MCF 10A (cell line): ENCODE measurements at regions of chr10 and their contacts with region 1.

Region 1: GRCh38 chr10:5446390-5446926 is 34.1 kb downstream of the NET1 start:
- DNase-seq: peak; percentile 79
- H3K4me3 Mint-ChIP-seq: peak overlapping the region; percentile 81
- H3K27ac Mint-ChIP-seq: peak overlapping the region; percentile 89
- H3K4me1 Mint-ChIP-seq: peaks cover 24% of the 10 kb centered on the region
- H3K27me3 Mint-ChIP-seq: no peaks in the 10 kb centered on the region
- CTCF ChIP-seq: no peak

Region 2: DNA sequence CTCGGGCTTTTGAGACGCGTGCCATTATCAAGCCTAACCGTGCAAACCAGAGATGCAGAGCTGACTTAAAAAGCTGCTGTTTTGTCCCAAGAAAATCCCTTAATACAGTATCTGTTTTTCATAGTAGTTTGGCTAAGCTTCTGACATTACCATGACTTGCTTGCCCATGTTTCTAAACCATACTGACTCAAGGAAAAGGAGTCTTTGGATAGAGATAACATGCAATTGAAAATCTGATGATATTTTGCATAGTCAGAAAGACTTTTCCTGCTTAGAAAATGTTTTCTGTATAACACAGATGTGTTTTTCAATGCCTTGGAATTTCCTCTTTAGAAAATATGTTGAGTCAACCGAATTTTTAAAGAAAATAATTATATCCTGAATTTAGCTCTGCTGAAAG is 642.0 kb before region 1 on chr10:
- CTCF ChIA-PET with region 1: no interaction called
- POLR2A ChIA-PET with region 1: no interaction called
- intact Hi-C with region 1: no loop called
- DNase-seq: no peak
- H3K4me3 Mint-ChIP-seq: no peak overlapping the region
- H3K27ac Mint-ChIP-seq: no peak overlapping the region
- H3K4me1 Mint-ChIP-seq: peaks cover 6% of the 10 kb centered on the region
- H3K27me3 Mint-ChIP-seq: no peaks in the 10 kb centered on the region
- CTCF ChIP-seq: no peak

Region 3: GRCh38 chr10:5534880-5535856 is 88.7 kb after region 1 on chr10:
- CTCF ChIA-PET with region 1: interaction called, 10 read pairs
- POLR2A ChIA-PET with region 1: interaction called, 30 read pairs
- intact Hi-C with region 1: no loop called
- DNase-seq: peak; percentile 88
- H3K4me3 Mint-ChIP-seq: peak overlapping the region; percentile 33
- H3K27ac Mint-ChIP-seq: no peak overlapping the region
- H3K4me1 Mint-ChIP-seq: peaks cover 29% of the 10 kb centered on the region
- H3K27me3 Mint-ChIP-seq: no peaks in the 10 kb centered on the region
- CTCF ChIP-seq: no peak

Region 4: GRCh38 chr10:5583525-5584175 is 137.2 kb after region 1 on chr10:
- CTCF ChIA-PET with region 1: interaction called, 7 read pairs
- POLR2A ChIA-PET with region 1: interaction called, 31 read pairs
- intact Hi-C with region 1: no loop called
- DNase-seq: peak; percentile 87
- H3K4me3 Mint-ChIP-seq: peak overlapping the region; percentile 51
- H3K27ac Mint-ChIP-seq: peak overlapping the region; percentile 92
- H3K4me1 Mint-ChIP-seq: peaks cover 30% of the 10 kb centered on the region
- H3K27me3 Mint-ChIP-seq: no peaks in the 10 kb centered on the region
- CTCF ChIP-seq: no peak

Region 5: DNA sequence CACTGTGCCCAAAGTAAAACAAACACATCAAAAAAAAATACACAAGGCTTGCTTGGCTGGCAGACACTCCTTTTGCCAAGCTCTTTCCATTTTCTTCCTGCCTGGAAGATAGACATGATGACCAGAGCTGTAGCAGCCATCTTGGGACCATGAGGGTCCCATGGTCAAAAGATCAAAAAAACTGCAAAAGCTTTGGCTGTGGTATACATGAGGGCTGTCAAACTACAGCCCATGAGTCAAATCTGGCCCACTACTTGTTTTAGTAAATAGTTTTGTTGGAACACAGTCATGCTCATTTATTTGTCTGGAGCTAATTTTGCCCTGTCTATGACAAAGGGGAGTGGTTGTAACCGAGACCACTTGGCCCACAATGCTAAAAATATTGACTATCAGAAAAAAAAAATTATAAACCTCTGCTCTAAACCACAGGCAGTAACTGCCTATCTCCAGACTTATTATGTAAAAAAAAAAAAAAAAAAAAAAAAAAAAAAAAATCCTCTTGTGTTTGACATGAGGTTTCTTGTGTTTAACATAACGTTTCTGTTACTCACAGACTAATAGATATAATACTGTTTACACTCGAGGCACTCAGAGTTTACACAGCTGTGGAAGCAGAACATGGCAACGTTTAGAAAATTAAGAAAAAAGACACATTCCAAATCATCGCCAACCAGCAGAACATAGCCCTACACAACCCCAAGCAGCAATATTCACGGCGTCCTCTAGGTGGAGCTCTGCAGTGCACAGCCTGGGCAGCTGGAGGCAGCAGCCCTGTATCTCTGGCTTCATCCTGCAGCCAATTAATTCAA is 183.0 kb after region 1 on chr10:
- CTCF ChIA-PET with region 1: interaction called, 264 read pairs
- POLR2A ChIA-PET with region 1: interaction called, 121 read pairs
- intact Hi-C with region 1: no loop called
- DNase-seq: peak; percentile 80
- H3K4me3 Mint-ChIP-seq: no peak overlapping the region
- H3K27ac Mint-ChIP-seq: no peak overlapping the region
- H3K4me1 Mint-ChIP-seq: peaks cover 31% of the 10 kb centered on the region
- H3K27me3 Mint-ChIP-seq: no peaks in the 10 kb centered on the region
- CTCF ChIP-seq: peak; percentile 83